PC-9 (cell line): ENCODE measurements at regions of chr20 and their contacts with region 1.

Region 1: DNA sequence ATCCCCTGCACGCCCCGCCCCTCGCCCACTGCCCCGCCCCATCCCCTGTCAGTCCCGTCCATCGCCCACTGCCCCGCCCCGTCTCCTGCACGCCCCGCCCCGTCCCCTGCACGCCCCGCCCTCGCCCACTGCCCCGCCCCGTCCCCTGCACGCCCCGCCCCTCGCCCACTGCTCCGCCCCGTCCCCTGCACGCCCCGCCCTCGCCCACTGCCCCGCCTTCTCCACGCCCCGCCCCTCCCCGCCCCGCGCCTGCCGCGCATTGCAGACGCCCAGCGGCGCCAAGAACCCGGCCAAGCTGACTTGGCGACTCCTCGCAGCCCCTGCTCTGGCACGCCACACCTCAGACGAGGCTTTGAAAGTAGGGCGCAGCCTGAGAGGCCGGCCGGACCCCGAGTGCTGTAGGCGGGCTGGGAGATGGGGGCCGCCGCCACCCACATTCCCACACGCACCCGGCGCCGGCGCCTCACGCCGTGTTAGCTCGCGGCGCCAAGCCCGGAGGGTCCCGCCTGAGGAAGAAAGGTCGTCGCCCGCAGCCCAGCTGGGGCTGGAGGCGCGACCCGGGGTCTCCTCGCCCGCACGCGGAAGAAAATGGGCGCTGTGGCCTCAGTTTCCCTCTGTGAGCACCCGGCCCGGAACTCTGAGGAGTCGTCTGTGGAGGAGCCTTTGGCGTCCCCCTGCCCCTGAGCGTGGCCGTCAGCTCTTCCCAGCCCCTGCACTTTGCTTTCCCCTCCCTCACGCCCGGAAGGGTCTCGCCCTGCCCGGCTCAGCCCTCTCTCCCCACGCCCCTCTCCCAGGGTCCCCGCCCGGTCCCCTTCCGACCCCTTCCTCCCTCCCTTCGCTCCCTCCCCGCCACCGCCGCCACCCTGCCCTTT is at the start of gene RAD21L1:
- DNase-seq: peak in 1 of 2 experiments; percentile 73
- H3K4me3 ChIP-seq: peak within 1 kb of the TSS; percentile 91
- H3K27ac ChIP-seq: no peak within 1 kb of the TSS
- H3K4me1 ChIP-seq: 0 out of 2 replicates have a peak, but pooled peaks cover 3% of the 10 kb centered on the region
- H3K27me3 ChIP-seq: peaks cover 28% of the 10 kb centered on the region
- CTCF ChIP-seq: no peak
- total RNA-seq, gene RAD21L1: 0.60 TPM in 1 of 2 replicates, not detected in the other

Region 2: DNA sequence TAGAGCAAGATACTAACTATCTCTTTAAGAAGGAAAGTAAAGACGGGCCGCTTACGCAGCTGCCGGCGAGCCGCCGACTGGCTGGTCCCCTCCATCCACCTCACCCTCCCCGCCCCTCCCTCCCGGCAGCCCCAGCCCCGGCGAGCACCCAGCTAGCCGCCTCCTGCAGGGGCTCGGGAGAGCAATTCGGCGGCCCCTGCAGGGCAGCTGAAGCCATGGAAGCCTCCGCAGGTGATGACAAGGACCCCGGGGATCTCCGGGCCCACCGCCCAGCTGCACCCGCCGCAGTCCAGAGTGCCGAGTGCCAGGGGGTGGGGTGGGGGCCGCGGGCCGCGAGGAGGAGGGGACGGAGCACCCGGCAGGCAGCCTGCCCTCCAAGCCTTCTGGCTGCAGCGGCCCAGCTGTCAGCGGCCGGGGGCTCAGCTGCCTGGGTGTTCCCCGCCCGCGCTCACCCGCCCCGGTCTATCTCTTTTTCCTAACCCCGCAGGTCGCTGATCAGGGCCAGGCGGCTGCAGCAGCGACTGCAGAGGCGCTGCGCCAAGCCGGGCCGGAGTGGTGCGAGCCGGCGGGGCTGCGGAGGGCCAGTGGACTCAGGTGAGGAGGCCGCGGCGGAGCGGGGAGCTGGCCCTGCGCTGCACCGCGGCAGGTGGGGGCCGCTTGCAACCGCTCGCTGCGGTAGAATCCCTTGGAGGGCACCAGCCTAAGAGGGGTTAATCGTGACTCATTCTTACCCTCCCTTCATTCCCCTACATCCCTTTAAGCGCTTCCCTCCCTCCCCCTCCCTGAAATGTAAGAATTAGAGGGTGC is 40.4 kb after region 1 on chr20 and contains the start of gene SNPH:
- CTCF ChIA-PET with region 1: no interaction called
- POLR2A ChIA-PET with region 1: no interaction called
- intact Hi-C with region 1: loop called (anchors 5 kb)
- DNase-seq: peak in 1 of 2 experiments; percentile 66
- H3K4me3 ChIP-seq: peak within 1 kb of the TSS; percentile 69
- H3K27ac ChIP-seq: no peak within 1 kb of the TSS
- H3K4me1 ChIP-seq: peaks cover 4% of the 10 kb centered on the region; the same call in 1 of the 2 replicates
- H3K27me3 ChIP-seq: no peaks in the 10 kb centered on the region
- CTCF ChIP-seq: no peak
- total RNA-seq, gene SNPH: 3.4 and 4.0 TPM in 2 replicates

Region 3: GRCh38 chr20:1313236-1313964 is 87.4 kb after region 1 on chr20:
- CTCF ChIA-PET with region 1: no interaction called
- POLR2A ChIA-PET with region 1: no interaction called
- intact Hi-C with region 1: loop called (anchors 10 kb)
- DNase-seq: peak in 1 of 2 experiments; percentile 60
- H3K4me3 ChIP-seq: no peak overlapping the region
- H3K27ac ChIP-seq: no peak overlapping the region
- H3K4me1 ChIP-seq: no peaks in the 10 kb centered on the region
- H3K27me3 ChIP-seq: no peaks in the 10 kb centered on the region
- CTCF ChIP-seq: peak; percentile 96

Region 4: GRCh38 chr20:1392823-1393506 is 166.9 kb after region 1 on chr20 and contains the start of gene FKBP1A:
- CTCF ChIA-PET with region 1: no interaction called
- POLR2A ChIA-PET with region 1: no interaction called
- intact Hi-C with region 1: no loop called
- DNase-seq: peak; percentile 83 to 89
- H3K4me3 ChIP-seq: peak within 1 kb of the TSS; percentile 97
- H3K27ac ChIP-seq: peak within 1 kb of the TSS; percentile 40; the same call in 1 of the 2 replicates
- H3K4me1 ChIP-seq: peaks cover 57% of the 10 kb centered on the region
- H3K27me3 ChIP-seq: no peaks in the 10 kb centered on the region
- CTCF ChIP-seq: no peak; the same call in 1 of the 2 replicates
- total RNA-seq, gene FKBP1A: 248 and 320 TPM in 2 replicates